CD4-positive, alpha-beta T cell (primary cell): ENCODE measurements at regions of chr9 and their contacts with region 1.

Region 1: GRCh38 chr9:5869315-5870019 is 21.2 kb upstream of the MLANA start:
- DNase-seq: peak in 7 of 14 experiments; percentile 5 to 38 (median 21)
- ATAC-seq: no peak
- H3K4me3 ChIP-seq: no peak overlapping the region
- H3K4me3 Mint-ChIP-seq: no peak overlapping the region
- H3K27ac ChIP-seq: no peak overlapping the region
- H3K27ac Mint-ChIP-seq: no peak overlapping the region
- H3K4me1 ChIP-seq: peaks cover 5% of the 10 kb centered on the region
- H3K4me1 Mint-ChIP-seq: peaks cover 5% of the 10 kb centered on the region
- H3K27me3 ChIP-seq: no peaks in the 10 kb centered on the region
- H3K27me3 Mint-ChIP-seq: no peaks in the 10 kb centered on the region
- CTCF ChIP-seq: no peak

Region 2: GRCh38 chr9:5857928-5858327 is 11.5 kb before region 1 on chr9:
- CTCF ChIA-PET with region 1: no interaction called
- POLR2A ChIA-PET with region 1: no interaction called
- intact Hi-C with region 1: no loop called
- DNase-seq: no peak
- ATAC-seq: no peak
- H3K4me3 ChIP-seq: no peak overlapping the region
- H3K4me3 Mint-ChIP-seq: no peak overlapping the region
- H3K27ac ChIP-seq: no peak overlapping the region
- H3K27ac Mint-ChIP-seq: no peak overlapping the region
- H3K4me1 ChIP-seq: peaks cover 6% of the 10 kb centered on the region
- H3K4me1 Mint-ChIP-seq: peaks cover 8% of the 10 kb centered on the region
- H3K27me3 ChIP-seq: no peaks in the 10 kb centered on the region
- H3K27me3 Mint-ChIP-seq: no peaks in the 10 kb centered on the region
- CTCF ChIP-seq: no peak

Region 3: GRCh38 chr9:5920860-5921328 is 51.4 kb after region 1 on chr9:
- CTCF ChIA-PET with region 1: no interaction called
- POLR2A ChIA-PET with region 1: no interaction called
- intact Hi-C with region 1: loop called in 1 of 2 experiments (anchors 10 kb)
- DNase-seq: no peak
- ATAC-seq: no peak
- H3K4me3 ChIP-seq: no peak overlapping the region
- H3K4me3 Mint-ChIP-seq: no peak overlapping the region
- H3K27ac ChIP-seq: no peak overlapping the region
- H3K27ac Mint-ChIP-seq: no peak overlapping the region
- H3K4me1 ChIP-seq: no peaks in the 10 kb centered on the region
- H3K4me1 Mint-ChIP-seq: no peaks in the 10 kb centered on the region
- H3K27me3 ChIP-seq: no peaks in the 10 kb centered on the region
- H3K27me3 Mint-ChIP-seq: no peaks in the 10 kb centered on the region
- CTCF ChIP-seq: no peak